CD14-positive monocyte (primary cell): ENCODE measurements at regions of chr6 and their contacts with region 1.

Region 1: GRCh38 chr6:15090145-15090579 is 155.7 kb upstream of the JARID2 start:
- DNase-seq: no peak
- H3K4me3 ChIP-seq: no peak overlapping the region
- H3K4me3 Mint-ChIP-seq: no peak overlapping the region
- H3K27ac ChIP-seq: peak overlapping the region in 1 of 2 donors; percentile 69
- H3K27ac Mint-ChIP-seq: peak overlapping the region in 6 of 7 donors; percentile 49 to 92 (median 88)
- H3K4me1 ChIP-seq: peaks cover 65 to 72% of the 10 kb centered on the region in 2 donors
- H3K4me1 Mint-ChIP-seq: peaks cover 68% of the 10 kb centered on the region
- H3K27me3 ChIP-seq: no peaks in the 10 kb centered on the region
- H3K27me3 Mint-ChIP-seq: peaks cover 0 to 3% (median 1%) of the 10 kb centered on the region in 3 donors
- CTCF ChIP-seq: no peak

Region 2: DNA sequence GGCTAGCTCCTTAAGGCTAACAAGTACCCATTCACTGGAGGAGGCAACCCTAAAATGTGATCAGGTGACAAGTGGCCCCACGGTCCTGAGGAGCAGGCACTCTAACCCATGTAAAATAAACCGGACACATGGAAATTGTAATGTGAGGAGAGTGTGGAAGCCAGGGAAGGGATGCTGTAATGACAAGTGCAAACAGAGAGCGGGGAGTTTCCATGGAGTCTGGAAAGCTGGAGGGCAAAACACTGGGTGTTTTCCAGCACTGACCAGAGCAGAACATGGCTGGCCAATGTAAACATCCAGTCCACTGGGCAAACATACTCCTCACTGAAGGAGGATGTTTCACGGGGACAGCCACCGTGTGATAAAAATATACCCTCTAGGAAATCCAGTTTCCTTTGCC is 63.4 kb before region 1 on chr6:
- intact Hi-C with region 1: no loop called
- DNase-seq: no peak
- H3K4me3 ChIP-seq: no peak overlapping the region
- H3K4me3 Mint-ChIP-seq: no peak overlapping the region
- H3K27ac ChIP-seq: no peak overlapping the region
- H3K27ac Mint-ChIP-seq: no peak overlapping the region
- H3K4me1 ChIP-seq: no peaks in the 10 kb centered on the region
- H3K4me1 Mint-ChIP-seq: peaks cover 5% of the 10 kb centered on the region
- H3K27me3 ChIP-seq: no peaks in the 10 kb centered on the region
- H3K27me3 Mint-ChIP-seq: peaks cover 1 to 6% (median 2%) of the 10 kb centered on the region in 3 donors
- CTCF ChIP-seq: no peak

Region 3: GRCh38 chr6:15073344-15073789 is 16.8 kb before region 1 on chr6:
- intact Hi-C with region 1: loop called in 1 of 2 experiments (anchors 2 kb)
- DNase-seq: no peak
- H3K4me3 ChIP-seq: no peak overlapping the region
- H3K4me3 Mint-ChIP-seq: no peak overlapping the region
- H3K27ac ChIP-seq: no peak overlapping the region
- H3K27ac Mint-ChIP-seq: no peak overlapping the region
- H3K4me1 ChIP-seq: peaks cover 2 to 16% of the 10 kb centered on the region in 2 donors
- H3K4me1 Mint-ChIP-seq: peaks cover 18% of the 10 kb centered on the region
- H3K27me3 ChIP-seq: no peaks in the 10 kb centered on the region
- H3K27me3 Mint-ChIP-seq: peaks cover 0 to 5% (median 5%) of the 10 kb centered on the region in 3 donors
- CTCF ChIP-seq: no peak

Region 4: DNA sequence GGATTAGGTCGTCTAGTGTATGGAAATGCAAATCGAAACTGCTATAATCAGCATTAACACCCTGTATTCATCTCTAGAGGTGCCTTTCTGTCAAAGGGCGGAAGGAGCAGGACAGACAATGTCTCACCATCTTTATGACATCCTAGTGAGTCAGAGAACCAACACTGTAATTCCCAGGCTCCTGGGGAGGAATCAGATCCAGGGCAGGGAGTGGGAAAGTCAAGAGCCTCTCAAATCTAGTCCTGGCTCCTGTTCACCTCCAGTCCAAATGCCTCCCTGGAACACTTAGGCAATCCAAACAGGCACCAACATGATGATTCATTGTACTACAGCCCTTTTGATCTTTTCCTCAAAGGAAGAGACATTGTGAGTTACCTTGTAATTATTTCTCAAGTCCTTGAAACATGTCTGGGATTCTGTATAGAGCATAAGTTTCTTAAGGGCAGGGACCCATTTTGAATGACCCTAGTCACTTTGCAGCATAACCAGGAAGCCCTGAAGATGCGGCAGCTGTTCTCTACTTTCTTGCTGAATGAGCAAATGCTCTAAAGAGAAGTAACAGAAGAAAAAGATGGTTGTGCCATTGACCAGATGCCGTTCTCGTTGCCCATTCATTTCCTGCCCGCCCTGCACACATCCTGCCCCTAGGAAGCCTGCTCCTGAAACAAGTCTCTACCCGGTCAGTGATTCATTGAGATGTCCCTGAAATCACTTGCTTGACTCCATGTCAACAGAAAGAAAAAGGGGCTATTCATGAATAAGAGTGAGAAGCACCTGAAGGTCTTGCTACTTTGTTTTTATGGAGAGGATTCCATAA is 42.9 kb after region 1 on chr6:
- intact Hi-C with region 1: loop called in 1 of 2 experiments (anchors 5 kb)
- DNase-seq: peak; percentile 32 to 61 (median 48)
- H3K4me3 ChIP-seq: peak overlapping the region in 1 of 3 experiments; percentile 9
- H3K4me3 Mint-ChIP-seq: peak overlapping the region in 1 of 2 donors; percentile 52
- H3K27ac ChIP-seq: peak overlapping the region in 1 of 2 donors; percentile 23
- H3K27ac Mint-ChIP-seq: peak overlapping the region in 6 of 7 donors; percentile 21 to 70 (median 54)
- H3K4me1 ChIP-seq: peaks cover 32 to 34% of the 10 kb centered on the region in 2 donors
- H3K4me1 Mint-ChIP-seq: peaks cover 56% of the 10 kb centered on the region
- H3K27me3 ChIP-seq: no peaks in the 10 kb centered on the region
- H3K27me3 Mint-ChIP-seq: peaks cover 0 to 3% (median 0%) of the 10 kb centered on the region in 3 donors
- CTCF ChIP-seq: no peak

Region 5: GRCh38 chr6:15399641-15400470 is 309.7 kb after region 1 on chr6:
- intact Hi-C with region 1: no loop called
- DNase-seq: no peak
- H3K4me3 ChIP-seq: peak overlapping the region in 1 of 3 experiments; percentile 52
- H3K4me3 Mint-ChIP-seq: peak overlapping the region; percentile 52 to 90
- H3K27ac ChIP-seq: peak overlapping the region in 1 of 2 donors; percentile 8
- H3K27ac Mint-ChIP-seq: peak overlapping the region in 6 of 7 donors; percentile 56 to 82 (median 66)
- H3K4me1 ChIP-seq: peaks cover 68 to 69% of the 10 kb centered on the region in 2 donors
- H3K4me1 Mint-ChIP-seq: peaks cover 75% of the 10 kb centered on the region
- H3K27me3 ChIP-seq: no peaks in the 10 kb centered on the region
- H3K27me3 Mint-ChIP-seq: peaks cover 0 to 2% (median 0%) of the 10 kb centered on the region in 3 donors
- CTCF ChIP-seq: no peak